Calu3 (cell line): ENCODE measurements at regions of chr12 and their contacts with region 1.

Region 1: GRCh38 chr12:18262514-18262913 is 1.2 kb downstream of the PIK3C2G start:
- DNase-seq: no peak
- H3K4me3 Mint-ChIP-seq: peak overlapping the region; percentile 70
- H3K27ac Mint-ChIP-seq: peak overlapping the region; percentile 99
- H3K4me1 Mint-ChIP-seq: peaks cover 27% of the 10 kb centered on the region
- H3K27me3 Mint-ChIP-seq: no peaks in the 10 kb centered on the region
- CTCF ChIP-seq: no peak

Region 2: DNA sequence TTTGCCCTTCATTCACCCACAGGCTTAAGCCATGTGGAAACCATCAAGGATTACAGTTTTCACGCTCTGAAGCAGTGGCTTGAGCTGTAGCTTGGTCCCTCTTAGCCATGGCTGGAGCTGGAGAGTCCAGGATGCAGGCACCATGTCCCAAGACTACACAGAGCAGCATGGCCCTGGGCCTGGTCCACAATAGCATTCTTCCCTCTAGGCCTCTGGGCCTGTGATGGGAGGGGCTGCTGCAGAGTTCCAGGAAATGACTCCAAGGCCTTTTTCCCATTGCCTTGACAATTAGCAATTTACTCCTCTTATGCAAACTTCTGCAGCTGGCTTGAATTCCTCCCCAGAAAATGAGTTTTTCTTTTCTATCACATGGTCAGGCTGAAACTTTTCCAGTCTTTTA is 383.8 kb before region 1 on chr12:
- CTCF ChIA-PET with region 1: no interaction called
- intact Hi-C with region 1: no loop called
- DNase-seq: no peak
- H3K4me3 Mint-ChIP-seq: no peak overlapping the region
- H3K27ac Mint-ChIP-seq: no peak overlapping the region
- H3K4me1 Mint-ChIP-seq: no peaks in the 10 kb centered on the region
- H3K27me3 Mint-ChIP-seq: no peaks in the 10 kb centered on the region
- CTCF ChIP-seq: no peak

Region 3: GRCh38 chr12:18281941-18282340 is 19.4 kb after region 1 on chr12:
- CTCF ChIA-PET with region 1: interaction called, 8 read pairs
- intact Hi-C with region 1: loop called (anchors 2 kb)
- DNase-seq: no peak
- H3K4me3 Mint-ChIP-seq: no peak overlapping the region
- H3K27ac Mint-ChIP-seq: peak overlapping the region; percentile 44
- H3K4me1 Mint-ChIP-seq: peaks cover 52% of the 10 kb centered on the region
- H3K27me3 Mint-ChIP-seq: no peaks in the 10 kb centered on the region
- CTCF ChIP-seq: no peak

Region 4: DNA sequence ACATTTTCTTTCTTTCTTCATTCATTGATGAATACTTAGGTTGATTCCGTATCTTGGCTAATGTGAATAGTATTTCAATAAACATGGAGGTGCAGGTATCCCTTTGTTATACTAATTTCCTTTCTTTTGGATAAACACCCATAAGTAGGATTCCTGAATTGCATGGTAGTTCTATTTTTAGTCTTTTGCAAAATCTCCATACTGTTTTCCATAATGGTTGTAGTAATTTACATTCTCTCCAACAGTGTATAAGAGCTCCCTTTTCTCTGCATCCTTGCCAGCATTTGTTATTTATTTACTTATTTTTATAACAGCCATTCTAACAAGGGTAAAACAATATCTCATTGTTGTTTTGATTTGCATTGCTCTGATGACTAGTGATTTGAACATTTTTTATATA is 35.4 kb after region 1 on chr12:
- CTCF ChIA-PET with region 1: interaction called, 3 read pairs
- intact Hi-C with region 1: loop called (anchors 2 kb)
- DNase-seq: no peak
- H3K4me3 Mint-ChIP-seq: peak overlapping the region; percentile 67
- H3K27ac Mint-ChIP-seq: peak overlapping the region; percentile 95
- H3K4me1 Mint-ChIP-seq: peaks cover 45% of the 10 kb centered on the region
- H3K27me3 Mint-ChIP-seq: no peaks in the 10 kb centered on the region
- CTCF ChIP-seq: no peak

Region 5: GRCh38 chr12:18320036-18320617 is 57.6 kb after region 1 on chr12:
- CTCF ChIA-PET with region 1: interaction called, 10 read pairs
- intact Hi-C with region 1: no loop called
- DNase-seq: peak; percentile 71
- H3K4me3 Mint-ChIP-seq: peak overlapping the region; percentile 52
- H3K27ac Mint-ChIP-seq: peak overlapping the region; percentile 78
- H3K4me1 Mint-ChIP-seq: peaks cover 26% of the 10 kb centered on the region
- H3K27me3 Mint-ChIP-seq: no peaks in the 10 kb centered on the region
- CTCF ChIP-seq: peak; percentile 51